ENCODE measurements at regions of chr2 and their contacts with region 1.

Region 1: GRCh38 chr2:174634130-174635014 is 36.8 kb upstream of the WIPF1 start:
- DNase-seq: peak; percentile 48 to 66 (median 53)
- H3K4me3 ChIP-seq: peak overlapping the region; percentile 54 to 72
- H3K4me3 Mint-ChIP-seq: peak overlapping the region; percentile 91 to 94 (median 92)
- H3K27ac ChIP-seq: peak overlapping the region; percentile 76
- H3K27ac Mint-ChIP-seq: peak overlapping the region; percentile 89 to 98 (median 94)
- H3K4me1 ChIP-seq: peaks cover 58% of the 10 kb centered on the region
- H3K4me1 Mint-ChIP-seq: peaks cover 46 to 84% (median 56%) of the 10 kb centered on the region in 4 donors
- H3K27me3 ChIP-seq: no peaks in the 10 kb centered on the region
- H3K27me3 Mint-ChIP-seq: no peaks in the 10 kb centered on the region

Region 2: GRCh38 chr2:174577967-174578589 is 56.3 kb before region 1 on chr2:
- CTCF ChIA-PET with region 1: interaction called, 21 read pairs
- POLR2A ChIA-PET with region 1: interaction called, 8 read pairs
- intact Hi-C with region 1: loop called (anchors 1 kb)
- DNase-seq: peak; percentile 63 to 77 (median 67)
- H3K4me3 ChIP-seq: no peak overlapping the region
- H3K4me3 Mint-ChIP-seq: peak overlapping the region in 1 of 8 donors; percentile 3
- H3K27ac ChIP-seq: no peak overlapping the region
- H3K27ac Mint-ChIP-seq: peak overlapping the region; percentile 66 to 88 (median 80)
- H3K4me1 ChIP-seq: peaks cover 93% of the 10 kb centered on the region
- H3K4me1 Mint-ChIP-seq: peaks cover 49 to 93% (median 68%) of the 10 kb centered on the region in 4 donors
- H3K27me3 ChIP-seq: no peaks in the 10 kb centered on the region
- H3K27me3 Mint-ChIP-seq: no peaks in the 10 kb centered on the region

Region 3: DNA sequence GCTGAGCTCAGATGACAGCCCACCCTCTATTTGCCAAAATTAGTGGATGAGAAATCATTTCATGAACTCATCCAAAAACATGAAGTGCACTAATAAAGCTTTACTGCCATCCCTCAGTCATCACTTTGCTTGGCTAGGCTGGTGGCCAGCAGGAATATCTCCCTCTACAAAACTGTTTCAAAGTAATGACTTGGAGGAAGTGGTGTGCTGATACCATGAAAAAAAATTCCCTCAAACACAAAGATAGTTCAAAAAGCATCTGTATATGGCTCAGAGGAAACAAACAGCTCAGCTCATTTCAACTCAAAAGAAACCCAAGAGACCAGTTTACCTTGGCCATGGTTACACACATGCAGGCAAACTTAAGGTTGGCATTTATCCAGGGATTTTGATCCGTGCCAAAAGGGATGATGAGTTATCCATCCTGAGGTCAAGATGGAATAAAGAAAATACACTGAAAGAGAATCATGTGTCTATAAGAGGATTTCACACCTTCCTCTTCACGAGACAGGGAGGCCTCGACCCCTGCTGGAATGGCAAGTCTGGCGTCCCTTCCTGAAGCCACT is 18.4 kb before region 1 on chr2:
- CTCF ChIA-PET with region 1: interaction called, 7 read pairs
- POLR2A ChIA-PET with region 1: interaction called, 43 read pairs
- intact Hi-C with region 1: loop called (anchors 2 kb)
- DNase-seq: no peak
- H3K4me3 ChIP-seq: no peak overlapping the region
- H3K4me3 Mint-ChIP-seq: peak overlapping the region in 7 of 8 donors; percentile 23 to 74 (median 52)
- H3K27ac ChIP-seq: peak overlapping the region; percentile 38
- H3K27ac Mint-ChIP-seq: peak overlapping the region; percentile 49 to 89 (median 78)
- H3K4me1 ChIP-seq: peaks cover 88% of the 10 kb centered on the region
- H3K4me1 Mint-ChIP-seq: peaks cover 61 to 94% (median 81%) of the 10 kb centered on the region in 4 donors
- H3K27me3 ChIP-seq: no peaks in the 10 kb centered on the region
- H3K27me3 Mint-ChIP-seq: no peaks in the 10 kb centered on the region

Region 4: GRCh38 chr2:174623690-174624089 is 10.7 kb before region 1 on chr2:
- CTCF ChIA-PET with region 1: interaction called, 4 read pairs
- POLR2A ChIA-PET with region 1: interaction called, 43 read pairs
- intact Hi-C with region 1: loop called (anchors 1 kb)
- DNase-seq: no peak
- H3K4me3 ChIP-seq: no peak overlapping the region
- H3K4me3 Mint-ChIP-seq: peak overlapping the region in 1 of 8 donors; percentile 44
- H3K27ac ChIP-seq: peak overlapping the region; percentile 28
- H3K27ac Mint-ChIP-seq: peak overlapping the region in 6 of 7 donors; percentile 52 to 85 (median 79)
- H3K4me1 ChIP-seq: peaks cover 68% of the 10 kb centered on the region
- H3K4me1 Mint-ChIP-seq: peaks cover 51 to 80% (median 67%) of the 10 kb centered on the region in 4 donors
- H3K27me3 ChIP-seq: no peaks in the 10 kb centered on the region
- H3K27me3 Mint-ChIP-seq: no peaks in the 10 kb centered on the region

Region 5: DNA sequence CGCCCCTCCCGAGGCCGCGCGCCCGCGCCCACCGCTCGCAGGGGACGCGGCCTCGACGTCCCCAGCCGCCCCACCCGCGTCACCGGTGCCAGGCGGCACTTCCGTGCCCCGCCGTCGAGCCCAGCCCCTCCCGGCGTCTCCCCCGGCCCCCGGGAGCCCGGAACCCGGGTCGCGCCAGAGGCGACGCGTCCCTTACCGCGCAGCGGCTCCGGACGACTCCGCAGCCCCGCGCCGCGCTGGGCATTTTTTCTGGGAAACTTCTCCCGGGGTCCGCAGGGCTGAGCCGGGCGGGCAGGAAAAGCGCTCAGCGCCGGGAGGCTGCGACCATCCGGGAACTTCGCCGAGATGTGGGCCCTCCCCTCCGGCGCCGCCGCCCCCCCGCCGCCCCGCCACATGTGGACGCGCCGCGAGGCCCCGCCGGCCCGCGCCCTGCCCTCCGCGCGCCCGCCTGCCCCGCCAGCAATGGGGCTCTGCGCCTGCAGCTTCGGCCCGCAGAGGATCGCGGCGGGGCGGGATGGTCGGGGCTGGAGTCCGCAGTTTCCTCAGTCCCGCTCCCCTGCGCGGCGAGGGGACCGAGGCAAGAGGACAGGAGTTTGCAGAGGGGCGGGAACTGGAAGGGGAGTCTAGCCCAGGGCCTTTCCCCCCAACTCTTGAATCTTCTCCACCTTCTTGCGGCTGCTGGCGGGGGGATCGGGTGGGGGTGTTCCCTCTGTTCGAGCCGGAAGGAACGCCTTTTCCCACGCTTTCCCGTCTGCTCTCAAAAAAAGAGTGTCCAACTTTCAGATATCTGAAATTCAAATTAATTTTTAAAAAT is 48.4 kb after region 1 on chr2:
- CTCF ChIA-PET with region 1: interaction called, 48 read pairs
- POLR2A ChIA-PET with region 1: interaction called, 39 read pairs
- intact Hi-C with region 1: loop called (anchors 1 kb)
- DNase-seq: peak; percentile 66 to 79 (median 73)
- H3K4me3 ChIP-seq: peak overlapping the region; percentile 49 to 69
- H3K4me3 Mint-ChIP-seq: peak overlapping the region; percentile 89 to 97 (median 93)
- H3K27ac ChIP-seq: peak overlapping the region; percentile 84
- H3K27ac Mint-ChIP-seq: peak overlapping the region; percentile 86 to 96 (median 94)
- H3K4me1 ChIP-seq: peaks cover 48% of the 10 kb centered on the region
- H3K4me1 Mint-ChIP-seq: peaks cover 36 to 60% (median 48%) of the 10 kb centered on the region in 4 donors
- H3K27me3 ChIP-seq: no peaks in the 10 kb centered on the region
- H3K27me3 Mint-ChIP-seq: no peaks in the 10 kb centered on the region

Region 6: GRCh38 chr2:174729797-174730697 is 95.7 kb after region 1 on chr2:
- CTCF ChIA-PET with region 1: no interaction called
- POLR2A ChIA-PET with region 1: no interaction called
- intact Hi-C with region 1: no loop called
- DNase-seq: peak; percentile 32 to 62 (median 40)
- H3K4me3 ChIP-seq: peak overlapping the region; percentile 17 to 76
- H3K4me3 Mint-ChIP-seq: peak overlapping the region; percentile 86 to 93 (median 90)
- H3K27ac ChIP-seq: no peak overlapping the region
- H3K27ac Mint-ChIP-seq: peak overlapping the region in 6 of 7 donors; percentile 50 to 83 (median 73)
- H3K4me1 ChIP-seq: peaks cover 17% of the 10 kb centered on the region
- H3K4me1 Mint-ChIP-seq: peaks cover 3 to 28% (median 10%) of the 10 kb centered on the region in 4 donors
- H3K27me3 ChIP-seq: no peaks in the 10 kb centered on the region
- H3K27me3 Mint-ChIP-seq: peaks cover 0 to 3% of the 10 kb centered on the region in 2 donors

Region 7: DNA sequence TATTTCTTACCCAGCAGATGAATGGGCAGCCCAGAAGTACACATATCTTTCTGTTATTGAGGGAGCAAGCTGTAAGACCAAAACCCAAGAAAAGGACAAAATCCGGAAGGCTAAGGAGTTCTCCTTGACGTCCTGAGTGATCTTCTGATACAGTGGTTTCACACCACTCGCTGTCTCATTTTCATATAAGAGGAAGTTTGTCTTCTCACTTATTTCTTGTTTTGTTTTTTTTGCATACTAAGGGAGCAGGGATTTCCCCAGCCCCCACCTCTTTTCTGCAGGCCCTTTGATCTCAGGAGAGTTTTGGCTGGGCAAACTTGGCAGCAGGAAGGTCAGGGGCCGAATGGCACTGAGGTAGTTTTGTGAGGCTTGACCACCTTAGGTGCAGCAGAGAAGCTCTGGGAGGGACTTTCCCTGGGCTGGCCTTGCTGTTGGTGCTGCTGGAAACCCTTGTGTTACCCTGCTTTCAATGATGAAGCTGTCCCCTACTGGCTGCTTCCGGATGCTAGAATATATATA is 116.6 kb after region 1 on chr2:
- CTCF ChIA-PET with region 1: no interaction called
- POLR2A ChIA-PET with region 1: no interaction called
- intact Hi-C with region 1: no loop called
- DNase-seq: peak; percentile 59 to 84 (median 66)
- H3K4me3 ChIP-seq: no peak overlapping the region
- H3K4me3 Mint-ChIP-seq: peak overlapping the region in 7 of 8 donors; percentile 29 to 85 (median 60)
- H3K27ac ChIP-seq: peak overlapping the region; percentile 49
- H3K27ac Mint-ChIP-seq: peak overlapping the region; percentile 80 to 97 (median 94)
- H3K4me1 ChIP-seq: peaks cover 52% of the 10 kb centered on the region
- H3K4me1 Mint-ChIP-seq: peaks cover 29 to 49% (median 40%) of the 10 kb centered on the region in 4 donors
- H3K27me3 ChIP-seq: no peaks in the 10 kb centered on the region
- H3K27me3 Mint-ChIP-seq: no peaks in the 10 kb centered on the region

Measured in CD4-positive, alpha-beta memory T cell (primary cell).